T-cell (primary cell): ENCODE measurements at regions of chr10 and their contacts with region 1.

Region 1: GRCh38 chr10:6267941-6268340 is 65.2 kb downstream of the PFKFB3 start:
- DNase-seq: no peak
- ATAC-seq: no peak
- H3K4me3 ChIP-seq: no peak overlapping the region
- H3K4me3 Mint-ChIP-seq: no peak overlapping the region
- H3K27ac ChIP-seq: no peak overlapping the region
- H3K27ac Mint-ChIP-seq: peak overlapping the region; percentile 27 to 58
- H3K4me1 ChIP-seq: peaks cover 6 to 33% of the 10 kb centered on the region in 2 experiments
- H3K4me1 Mint-ChIP-seq: peaks cover 26 to 44% (median 42%) of the 10 kb centered on the region in 3 donors
- H3K27me3 ChIP-seq: no peaks in the 10 kb centered on the region
- H3K27me3 Mint-ChIP-seq: no peaks in the 10 kb centered on the region

Region 2: DNA sequence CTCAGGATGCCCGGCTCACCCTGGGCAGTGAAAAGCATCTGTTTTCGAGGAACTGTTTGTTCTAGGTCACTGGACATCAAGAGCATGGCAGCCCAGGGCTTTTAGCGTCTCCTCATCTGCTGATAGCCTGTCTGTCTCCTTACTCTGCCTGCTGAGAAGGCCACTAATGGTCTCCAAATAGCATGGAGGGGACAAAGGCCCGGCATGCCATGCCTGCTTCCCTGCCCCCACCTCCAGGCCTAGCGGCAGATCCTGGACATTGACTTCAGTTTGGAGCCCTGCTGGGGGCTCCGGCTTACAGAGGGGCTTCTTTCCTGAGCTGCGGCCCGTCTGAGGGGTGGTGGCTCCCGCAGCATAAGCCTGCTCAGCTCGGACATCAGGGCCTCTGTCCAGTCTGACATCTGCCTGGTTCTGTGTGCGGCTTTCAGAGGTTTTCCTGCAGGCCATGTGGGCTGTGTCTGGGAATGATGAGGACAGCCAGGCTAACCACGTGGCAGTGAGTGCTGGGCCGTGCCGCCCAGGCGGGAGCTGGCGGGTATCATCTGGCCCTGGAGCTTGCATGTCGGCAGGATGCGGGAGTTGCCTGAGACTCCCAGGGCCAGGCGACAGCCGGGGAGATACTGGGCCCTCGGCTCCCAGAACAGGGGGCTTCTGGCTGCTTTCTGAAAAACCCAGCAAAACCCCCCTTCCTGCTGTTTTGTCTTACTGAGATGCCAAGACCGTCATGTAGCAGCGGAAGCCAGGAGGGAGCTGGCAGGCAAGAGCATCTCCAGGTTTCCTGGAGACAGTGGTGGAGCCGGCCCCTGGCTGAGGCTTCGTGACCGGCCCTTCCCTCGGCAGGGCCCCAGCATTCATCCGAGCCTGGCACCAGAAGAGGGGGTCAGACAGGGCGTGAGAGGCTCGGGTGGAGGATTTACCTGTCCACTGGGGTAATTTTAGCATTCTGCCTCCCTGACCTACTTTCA is 56.0 kb before region 1 on chr10:
- CTCF ChIA-PET with region 1: no interaction called
- POLR2A ChIA-PET with region 1: no interaction called
- DNase-seq: no peak
- ATAC-seq: no peak
- H3K4me3 ChIP-seq: no peak overlapping the region
- H3K4me3 Mint-ChIP-seq: no peak overlapping the region
- H3K27ac ChIP-seq: no peak overlapping the region
- H3K27ac Mint-ChIP-seq: no peak overlapping the region
- H3K4me1 ChIP-seq: no peaks in the 10 kb centered on the region
- H3K4me1 Mint-ChIP-seq: peaks cover 16 to 28% (median 24%) of the 10 kb centered on the region in 3 donors
- H3K27me3 ChIP-seq: no peaks in the 10 kb centered on the region
- H3K27me3 Mint-ChIP-seq: no peaks in the 10 kb centered on the region

Region 3: GRCh38 chr10:6254201-6254600 is 13.7 kb before region 1 on chr10:
- CTCF ChIA-PET with region 1: interaction called in 1 of 2 experiments, 15 read pairs
- POLR2A ChIA-PET with region 1: no interaction called
- DNase-seq: no peak
- ATAC-seq: no peak
- H3K4me3 ChIP-seq: no peak overlapping the region
- H3K4me3 Mint-ChIP-seq: no peak overlapping the region
- H3K27ac ChIP-seq: no peak overlapping the region
- H3K27ac Mint-ChIP-seq: no peak overlapping the region
- H3K4me1 ChIP-seq: no peaks in the 10 kb centered on the region
- H3K4me1 Mint-ChIP-seq: no peaks in the 10 kb centered on the region
- H3K27me3 ChIP-seq: no peaks in the 10 kb centered on the region
- H3K27me3 Mint-ChIP-seq: no peaks in the 10 kb centered on the region

Region 4: GRCh38 chr10:6416892-6417512 is 149.1 kb after region 1 on chr10:
- CTCF ChIA-PET with region 1: no interaction called
- POLR2A ChIA-PET with region 1: no interaction called
- DNase-seq: peak in 2 of 35 experiments; percentile 37 to 76
- ATAC-seq: peak in 3 of 4 experiments; percentile 61 to 78 (median 64)
- H3K4me3 ChIP-seq: no peak overlapping the region
- H3K4me3 Mint-ChIP-seq: no peak overlapping the region
- H3K27ac ChIP-seq: no peak overlapping the region
- H3K27ac Mint-ChIP-seq: no peak overlapping the region
- H3K4me1 ChIP-seq: no peaks in the 10 kb centered on the region
- H3K4me1 Mint-ChIP-seq: peaks cover 0 to under 1% (median 0%) of the 10 kb centered on the region in 3 donors
- H3K27me3 ChIP-seq: no peaks in the 10 kb centered on the region
- H3K27me3 Mint-ChIP-seq: no peaks in the 10 kb centered on the region

Region 5: GRCh38 chr10:7362471-7362870 is 1094.5 kb after region 1 on chr10:
- CTCF ChIA-PET with region 1: no interaction called
- POLR2A ChIA-PET with region 1: no interaction called
- DNase-seq: no peak
- ATAC-seq: no peak
- H3K4me3 ChIP-seq: no peak overlapping the region
- H3K4me3 Mint-ChIP-seq: no peak overlapping the region
- H3K27ac ChIP-seq: no peak overlapping the region
- H3K27ac Mint-ChIP-seq: no peak overlapping the region
- H3K4me1 ChIP-seq: peaks cover 0 to 2% of the 10 kb centered on the region in 2 experiments
- H3K4me1 Mint-ChIP-seq: peaks cover 32 to 49% (median 39%) of the 10 kb centered on the region in 3 donors
- H3K27me3 ChIP-seq: no peaks in the 10 kb centered on the region
- H3K27me3 Mint-ChIP-seq: no peaks in the 10 kb centered on the region